ENCODE measurements at regions of chrX and their contacts with region 1.

Region 1: DNA sequence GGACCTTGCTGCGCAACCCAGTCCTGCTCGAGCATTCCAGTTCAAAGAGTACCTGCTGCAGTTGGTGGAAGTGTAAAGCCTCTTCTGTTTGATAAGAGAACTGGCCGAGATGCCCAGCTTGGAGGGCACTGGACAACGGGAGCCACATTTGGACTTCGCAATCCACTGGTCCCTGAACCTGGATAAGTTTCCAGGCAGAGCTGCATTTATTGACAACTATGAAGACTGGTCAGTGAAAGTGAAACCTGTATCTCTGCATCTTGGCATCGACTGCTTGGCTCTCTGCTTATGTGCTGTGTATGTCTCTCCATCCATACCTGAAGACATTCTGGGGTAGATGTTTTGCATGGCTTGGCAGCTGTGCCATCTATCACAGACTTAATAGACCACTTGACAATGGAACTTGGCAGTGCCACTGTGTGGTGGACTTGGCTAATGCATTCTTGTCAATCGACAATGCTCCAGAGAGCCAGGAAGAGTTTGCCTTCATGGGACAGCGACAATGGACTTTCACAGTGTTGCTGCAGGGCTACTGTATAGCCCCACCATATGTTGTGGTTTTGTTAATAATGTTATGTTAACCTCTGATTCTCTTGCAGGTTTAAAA is 43.5 kb upstream of the ZBTB33 start:
- DNase-seq: no peak
- H3K4me3 ChIP-seq: no peak overlapping the region
- H3K27ac ChIP-seq: no peak overlapping the region
- H3K4me1 ChIP-seq: no peaks in the 10 kb centered on the region
- H3K27me3 ChIP-seq: no peaks in the 10 kb centered on the region
- CTCF ChIP-seq: no peak

Region 2: GRCh38 chrX:119826399-119826959 is 380.6 kb before region 1 on chrX:
- intact Hi-C with region 1: no loop called
- DNase-seq: no peak
- H3K4me3 ChIP-seq: no peak overlapping the region
- H3K27ac ChIP-seq: no peak overlapping the region
- H3K4me1 ChIP-seq: no peaks in the 10 kb centered on the region
- H3K27me3 ChIP-seq: no peaks in the 10 kb centered on the region
- CTCF ChIP-seq: no peak

Region 3: DNA sequence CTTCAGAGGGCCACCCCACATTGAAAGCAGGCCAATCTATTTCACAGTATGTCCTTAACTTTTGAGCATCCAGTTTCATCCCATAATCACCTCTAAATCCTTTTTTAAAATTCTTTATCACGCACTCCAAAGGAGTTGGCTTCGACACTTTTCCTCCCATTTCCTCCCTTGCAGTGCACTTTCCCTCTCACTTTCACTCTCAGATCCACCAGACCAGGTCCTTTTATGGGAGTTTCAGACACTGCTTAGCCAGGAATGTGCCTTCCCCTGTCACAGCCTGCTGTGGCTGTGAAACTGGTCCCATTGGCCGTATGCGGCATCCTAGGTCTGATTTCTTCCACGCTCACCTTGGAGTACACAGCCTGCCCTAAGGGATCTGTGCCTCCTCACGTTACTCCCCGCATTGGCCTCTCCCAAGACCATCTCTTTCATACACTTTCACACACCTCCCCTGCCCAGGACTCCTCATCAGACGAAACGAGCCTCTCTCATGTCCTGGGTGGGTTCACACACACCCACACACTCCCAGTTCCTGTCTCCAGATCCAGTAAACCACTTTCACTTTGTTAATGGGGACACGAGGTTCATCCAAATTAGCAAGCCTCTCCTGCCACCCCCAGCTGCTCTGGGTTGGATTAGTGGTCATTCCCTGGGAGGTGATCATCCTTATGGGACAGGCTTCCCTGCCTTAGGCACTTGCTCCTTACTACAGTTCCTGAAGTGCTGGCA is 119.7 kb before region 1 on chrX:
- intact Hi-C with region 1: loop called (anchors 10 kb)
- DNase-seq: no peak
- H3K4me3 ChIP-seq: no peak overlapping the region
- H3K27ac ChIP-seq: no peak overlapping the region
- H3K4me1 ChIP-seq: no peaks in the 10 kb centered on the region
- H3K27me3 ChIP-seq: no peaks in the 10 kb centered on the region
- CTCF ChIP-seq: no peak

Measured in colonic mucosa (tissue), 4 donors.